ENCODE measurements at regions of chr3 and their contacts with region 1.

Region 1: DNA sequence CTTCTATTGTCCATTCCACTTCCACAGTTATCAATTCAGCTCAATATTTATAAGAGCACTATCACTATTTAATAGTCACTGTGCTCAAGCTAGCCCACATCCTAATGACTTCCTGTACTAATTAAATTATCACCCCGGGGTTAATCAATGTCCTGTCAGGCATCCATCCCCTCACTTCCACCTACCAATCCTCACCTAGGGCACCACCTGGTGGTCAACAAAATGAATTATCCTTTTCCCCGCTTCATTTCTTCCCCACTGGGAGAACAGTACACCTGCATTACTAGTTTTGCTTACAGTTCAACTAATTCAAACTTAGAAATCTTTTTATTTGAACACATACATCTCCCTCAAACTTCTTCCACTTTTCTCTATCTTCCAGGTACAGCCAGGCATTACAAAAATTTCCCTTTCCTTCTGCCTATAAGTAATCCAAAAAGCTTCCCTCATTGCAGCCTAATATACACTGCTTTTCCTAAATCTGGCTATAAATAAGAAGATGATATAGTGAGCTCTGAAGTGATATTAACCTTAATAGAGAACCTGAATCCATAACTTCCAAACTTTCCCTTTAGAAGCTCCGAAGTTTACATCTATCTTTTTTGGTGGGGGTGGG is 68.5 kb downstream of the TMCC1 start:
- DNase-seq: peak; percentile 58
- ATAC-seq: no peak
- H3K4me3 ChIP-seq: no peak overlapping the region
- H3K27ac ChIP-seq: no peak overlapping the region
- H3K4me1 ChIP-seq: peaks cover 2% of the 10 kb centered on the region; the same call in 1 of the 2 replicates
- H3K27me3 ChIP-seq: no peaks in the 10 kb centered on the region
- CTCF ChIP-seq: peak; percentile 64
- POLR2A ChIP-seq: no peak
- RAD21 ChIP-seq: peak; percentile 81

Region 2: GRCh38 chr3:129439817-129440617 is 385.0 kb before region 1 on chr3 and contains the starts of genes IFT122 and MBD4:
- CTCF ChIA-PET with region 1: no interaction called
- POLR2A ChIA-PET with region 1: no interaction called
- dilution Hi-C with region 1: no loop called
- in situ Hi-C with region 1: no loop called
- intact Hi-C with region 1: loop called (anchors 5 kb)
- DNase-seq: peak; percentile 100
- ATAC-seq: peak; percentile 93
- H3K4me3 ChIP-seq: peak within 1 kb of the TSS; percentile 68
- H3K27ac ChIP-seq: peak within 1 kb of the TSS; percentile 82
- H3K4me1 ChIP-seq: peaks cover 4% of the 10 kb centered on the region
- H3K27me3 ChIP-seq: no peaks in the 10 kb centered on the region
- CTCF ChIP-seq: no peak
- POLR2A ChIP-seq: peak; percentile 77
- RAD21 ChIP-seq: no peak
- total RNA-seq, gene IFT122: 27.2 and 28.0 TPM in 2 replicates
- total RNA-seq, gene MBD4: 13.8 and 22.2 TPM in 2 replicates

Region 3: GRCh38 chr3:129650256-129650872 is 174.7 kb before region 1 on chr3:
- CTCF ChIA-PET with region 1: interaction called, 6 read pairs
- POLR2A ChIA-PET with region 1: no interaction called
- dilution Hi-C with region 1: no loop called
- in situ Hi-C with region 1: loop called (anchors 5 kb)
- intact Hi-C with region 1: loop called (anchors 1 kb)
- DNase-seq: peak; percentile 84
- ATAC-seq: peak; percentile 75; the same call in 1 of the 2 replicates
- H3K4me3 ChIP-seq: no peak overlapping the region
- H3K27ac ChIP-seq: no peak overlapping the region
- H3K4me1 ChIP-seq: peaks cover 17% of the 10 kb centered on the region
- H3K27me3 ChIP-seq: no peaks in the 10 kb centered on the region
- CTCF ChIP-seq: peak; percentile 91
- POLR2A ChIP-seq: no peak
- RAD21 ChIP-seq: peak; percentile 87

Region 4: DNA sequence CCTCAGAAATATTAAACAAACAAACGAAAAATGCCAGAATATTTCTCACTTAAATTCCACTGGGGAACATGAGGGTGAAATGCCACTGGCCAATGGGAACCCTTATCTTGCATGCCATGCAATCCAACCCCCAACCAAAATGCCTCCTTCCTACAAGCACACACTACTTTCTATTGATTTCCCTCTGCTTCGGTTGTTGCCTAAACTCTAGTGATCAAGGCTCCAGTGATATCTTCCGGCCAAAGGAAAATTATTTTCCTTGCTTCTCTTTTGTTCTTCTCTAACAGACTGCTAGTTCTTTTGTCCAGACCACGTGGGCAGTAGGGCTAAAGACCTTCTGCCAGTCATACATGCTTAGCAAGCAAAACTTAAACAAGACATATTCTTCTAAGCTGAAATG is 47.2 kb before region 1 on chr3:
- CTCF ChIA-PET with region 1: no interaction called
- POLR2A ChIA-PET with region 1: no interaction called
- dilution Hi-C with region 1: no loop called
- in situ Hi-C with region 1: no loop called
- intact Hi-C with region 1: no loop called
- DNase-seq: no peak
- ATAC-seq: peak; percentile 83
- H3K4me3 ChIP-seq: no peak overlapping the region
- H3K27ac ChIP-seq: no peak overlapping the region
- H3K4me1 ChIP-seq: no peaks in the 10 kb centered on the region
- H3K27me3 ChIP-seq: no peaks in the 10 kb centered on the region
- CTCF ChIP-seq: no peak
- POLR2A ChIP-seq: no peak
- RAD21 ChIP-seq: no peak

Region 5: GRCh38 chr3:129893581-129894070 is 68.6 kb after region 1 on chr3 and contains the start of gene TMCC1:
- CTCF ChIA-PET with region 1: no interaction called
- POLR2A ChIA-PET with region 1: no interaction called
- dilution Hi-C with region 1: no loop called
- in situ Hi-C with region 1: no loop called
- intact Hi-C with region 1: loop called (anchors 2 kb)
- DNase-seq: peak; percentile 64
- ATAC-seq: peak; percentile 91
- H3K4me3 ChIP-seq: peak within 1 kb of the TSS; percentile 94
- H3K27ac ChIP-seq: peak within 1 kb of the TSS; percentile 67
- H3K4me1 ChIP-seq: peaks cover 2% of the 10 kb centered on the region; the same call in 1 of the 2 replicates
- H3K27me3 ChIP-seq: no peaks in the 10 kb centered on the region
- CTCF ChIP-seq: no peak
- POLR2A ChIP-seq: no peak
- RAD21 ChIP-seq: no peak
- total RNA-seq, gene TMCC1: 7.2 and 7.3 TPM in 2 replicates

Region 6: DNA sequence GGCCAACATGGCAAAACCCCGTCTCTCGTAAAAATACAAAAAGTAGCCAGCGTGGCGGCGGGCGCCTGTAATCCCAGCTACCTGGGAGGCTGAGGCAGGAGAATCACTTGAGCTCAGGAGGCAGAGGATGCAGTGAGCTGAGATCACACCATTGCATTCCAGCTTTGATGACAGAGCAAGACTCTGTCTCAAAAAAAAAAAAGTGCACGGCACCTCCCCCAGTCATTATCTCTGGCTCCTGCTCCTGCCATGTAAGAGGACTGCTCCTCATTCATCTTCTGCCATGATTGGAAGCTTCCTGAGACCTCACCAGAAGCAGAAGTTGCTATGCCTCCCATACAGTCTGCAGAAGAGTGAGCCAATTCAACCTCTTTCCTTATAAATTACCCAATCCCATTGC is 252.6 kb after region 1 on chr3:
- CTCF ChIA-PET with region 1: no interaction called
- POLR2A ChIA-PET with region 1: no interaction called
- dilution Hi-C with region 1: no loop called
- in situ Hi-C with region 1: no loop called
- intact Hi-C with region 1: no loop called
- DNase-seq: no peak
- ATAC-seq: no peak
- H3K4me3 ChIP-seq: no peak overlapping the region
- H3K27ac ChIP-seq: no peak overlapping the region
- H3K4me1 ChIP-seq: no peaks in the 10 kb centered on the region
- H3K27me3 ChIP-seq: peaks cover 4% of the 10 kb centered on the region
- CTCF ChIP-seq: no peak
- POLR2A ChIP-seq: no peak
- RAD21 ChIP-seq: no peak

Region 7: DNA sequence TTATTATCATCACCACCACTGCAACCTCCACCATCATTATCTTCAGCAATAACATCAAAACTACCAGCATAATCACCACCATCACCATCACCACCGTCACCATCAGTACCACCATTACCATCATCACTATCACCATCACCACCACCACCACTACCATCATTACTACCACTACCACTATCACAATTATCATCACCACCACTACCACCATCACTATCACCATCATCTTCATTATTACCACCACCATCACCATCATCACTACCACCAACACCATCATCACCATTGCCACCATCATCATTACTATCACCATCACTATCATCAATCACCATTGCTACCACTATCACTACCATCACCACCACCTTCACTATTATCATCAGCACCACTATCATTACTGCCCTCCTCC is 411.4 kb after region 1 on chr3:
- CTCF ChIA-PET with region 1: no interaction called
- POLR2A ChIA-PET with region 1: no interaction called
- dilution Hi-C with region 1: no loop called
- in situ Hi-C with region 1: no loop called
- intact Hi-C with region 1: no loop called
- DNase-seq: no peak
- ATAC-seq: no peak
- H3K4me3 ChIP-seq: no peak overlapping the region
- H3K27ac ChIP-seq: no peak overlapping the region
- H3K4me1 ChIP-seq: no peaks in the 10 kb centered on the region
- H3K27me3 ChIP-seq: no peaks in the 10 kb centered on the region
- CTCF ChIP-seq: no peak
- POLR2A ChIP-seq: no peak
- RAD21 ChIP-seq: no peak

Region 8: DNA sequence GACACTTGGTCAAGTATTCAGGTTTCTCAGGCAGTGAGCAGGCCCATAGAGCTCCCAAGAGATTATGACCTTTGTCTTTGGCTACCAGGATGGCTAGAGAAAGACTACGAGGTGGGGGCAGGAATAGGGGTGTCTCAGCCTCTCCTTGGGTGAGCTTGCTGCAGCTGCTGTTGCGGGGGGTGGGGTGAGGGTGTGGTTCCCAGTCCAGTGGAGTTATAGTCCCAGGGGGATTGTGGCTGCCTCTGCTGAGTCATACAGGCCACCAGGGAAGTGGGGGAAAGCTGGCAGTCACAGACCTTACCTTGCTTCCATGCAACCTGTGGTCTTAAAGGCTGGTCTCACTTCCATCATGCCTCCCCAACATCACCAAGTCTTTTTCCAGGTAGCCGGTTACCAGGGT is 1100.6 kb after region 1 on chr3:
- CTCF ChIA-PET with region 1: no interaction called
- POLR2A ChIA-PET with region 1: no interaction called
- dilution Hi-C with region 1: no loop called
- in situ Hi-C with region 1: no loop called
- intact Hi-C with region 1: no loop called
- DNase-seq: no peak
- ATAC-seq: no peak
- H3K4me3 ChIP-seq: no peak overlapping the region
- H3K27ac ChIP-seq: no peak overlapping the region
- H3K4me1 ChIP-seq: no peaks in the 10 kb centered on the region
- H3K27me3 ChIP-seq: no peaks in the 10 kb centered on the region
- CTCF ChIP-seq: no peak
- POLR2A ChIP-seq: no peak
- RAD21 ChIP-seq: no peak